Panc1 (cell line): ENCODE measurements at regions of chr18 and their contacts with region 1.

Region 1: DNA sequence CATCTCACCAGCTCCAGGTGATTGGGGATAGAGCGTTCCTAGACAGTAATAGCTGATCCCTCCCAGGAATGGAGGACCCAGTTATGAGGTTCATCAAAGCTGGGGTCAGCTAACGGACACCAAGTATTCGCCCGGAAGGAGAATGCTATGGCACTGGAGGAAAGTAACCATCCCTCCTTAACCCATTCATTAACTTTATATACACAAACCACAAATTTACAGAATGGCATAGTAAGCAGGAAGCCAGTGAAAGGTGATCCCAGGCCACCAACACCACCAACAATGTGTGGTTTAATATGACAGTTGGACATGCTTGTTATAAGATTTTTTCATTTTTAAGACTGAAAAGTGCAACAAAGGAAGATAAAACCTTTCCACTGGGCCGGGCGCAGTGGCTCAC is 55.3 kb upstream of the CHMP1B start:
- DNase-seq: no peak
- ATAC-seq: no peak
- H3K4me3 ChIP-seq: no peak overlapping the region
- H3K27ac ChIP-seq: no peak overlapping the region
- H3K4me1 ChIP-seq: no peaks in the 10 kb centered on the region
- H3K27me3 ChIP-seq: no peaks in the 10 kb centered on the region
- CTCF ChIP-seq: no peak

Region 2: GRCh38 chr18:11577271-11578112 is 218.4 kb before region 1 on chr18:
- CTCF ChIA-PET with region 1: no interaction called
- POLR2A ChIA-PET with region 1: no interaction called
- in situ Hi-C with region 1: no loop called
- intact Hi-C with region 1: no loop called
- DNase-seq: no peak
- ATAC-seq: no peak
- H3K4me3 ChIP-seq: no peak overlapping the region
- H3K27ac ChIP-seq: no peak overlapping the region
- H3K4me1 ChIP-seq: no peaks in the 10 kb centered on the region
- H3K27me3 ChIP-seq: peaks cover 11% of the 10 kb centered on the region
- CTCF ChIP-seq: no peak

Region 3: DNA sequence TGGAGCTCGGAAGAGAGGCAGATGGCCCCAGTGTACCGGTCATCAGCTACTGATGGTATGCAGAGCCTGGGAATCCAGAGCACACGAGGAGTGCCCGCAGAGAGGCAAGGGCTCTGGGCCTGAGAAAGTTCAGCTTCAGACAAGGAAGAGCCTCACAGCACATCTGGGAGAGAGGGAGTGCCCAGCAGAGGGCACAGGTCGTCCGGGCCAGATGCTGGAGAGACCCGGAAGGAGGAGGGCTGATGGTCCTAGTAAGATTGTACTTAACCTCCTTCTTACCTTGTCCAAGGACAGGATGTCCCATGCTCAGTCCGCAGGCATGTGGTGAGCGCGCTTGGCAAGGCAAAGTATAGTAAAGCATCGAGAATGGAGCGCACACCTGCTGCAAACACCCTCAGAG is 30.9 kb after region 1 on chr18:
- CTCF ChIA-PET with region 1: interaction called, 10 read pairs
- POLR2A ChIA-PET with region 1: no interaction called
- in situ Hi-C with region 1: no loop called
- intact Hi-C with region 1: no loop called
- DNase-seq: no peak
- ATAC-seq: no peak
- H3K4me3 ChIP-seq: no peak overlapping the region
- H3K27ac ChIP-seq: no peak overlapping the region
- H3K4me1 ChIP-seq: no peaks in the 10 kb centered on the region
- H3K27me3 ChIP-seq: no peaks in the 10 kb centered on the region
- CTCF ChIP-seq: no peak

Region 4: DNA sequence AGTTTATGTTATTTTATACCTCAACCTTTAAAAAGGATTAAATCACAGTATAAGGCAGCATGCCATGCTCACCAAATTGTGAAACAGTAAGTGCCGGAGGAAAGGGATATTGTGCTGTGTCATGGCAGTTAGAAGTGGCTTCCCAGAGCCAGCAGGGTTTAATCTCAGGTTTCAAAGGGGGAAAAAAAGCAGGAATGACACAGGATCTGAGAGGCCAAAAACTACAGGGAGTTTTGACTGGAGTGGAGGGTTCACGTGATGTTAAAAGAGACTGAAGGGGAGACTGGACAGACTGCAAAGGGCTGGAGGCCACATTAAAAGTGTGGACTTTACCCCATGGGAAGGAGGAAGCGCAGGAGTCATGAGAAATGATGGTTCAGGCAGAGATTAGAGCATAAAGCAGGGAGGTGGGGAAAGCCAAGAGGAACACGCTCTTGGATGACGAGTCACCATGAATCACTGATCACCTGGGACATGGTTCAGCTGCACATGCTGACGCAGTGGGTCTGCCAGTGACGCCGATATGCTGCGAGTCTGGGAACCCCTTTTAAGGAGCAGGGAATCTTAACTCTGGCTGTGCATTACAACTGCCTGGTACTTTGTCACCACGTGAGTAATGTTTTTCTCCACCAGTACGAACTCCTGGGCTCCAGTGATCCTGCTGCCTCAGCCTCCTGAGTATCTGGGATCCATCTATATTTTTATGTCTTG is 61.4 kb after region 1 on chr18:
- CTCF ChIA-PET with region 1: no interaction called
- POLR2A ChIA-PET with region 1: no interaction called
- in situ Hi-C with region 1: no loop called
- intact Hi-C with region 1: no loop called
- DNase-seq: peak; percentile 98
- ATAC-seq: peak; percentile 92
- H3K4me3 ChIP-seq: peak overlapping the region in 1 of 2 experiments; percentile 50; a peak in 3 of 4 replicates
- H3K27ac ChIP-seq: peak overlapping the region; percentile 91
- H3K4me1 ChIP-seq: peaks cover 20% of the 10 kb centered on the region
- H3K27me3 ChIP-seq: no peaks in the 10 kb centered on the region
- CTCF ChIP-seq: no peak

Region 5: DNA sequence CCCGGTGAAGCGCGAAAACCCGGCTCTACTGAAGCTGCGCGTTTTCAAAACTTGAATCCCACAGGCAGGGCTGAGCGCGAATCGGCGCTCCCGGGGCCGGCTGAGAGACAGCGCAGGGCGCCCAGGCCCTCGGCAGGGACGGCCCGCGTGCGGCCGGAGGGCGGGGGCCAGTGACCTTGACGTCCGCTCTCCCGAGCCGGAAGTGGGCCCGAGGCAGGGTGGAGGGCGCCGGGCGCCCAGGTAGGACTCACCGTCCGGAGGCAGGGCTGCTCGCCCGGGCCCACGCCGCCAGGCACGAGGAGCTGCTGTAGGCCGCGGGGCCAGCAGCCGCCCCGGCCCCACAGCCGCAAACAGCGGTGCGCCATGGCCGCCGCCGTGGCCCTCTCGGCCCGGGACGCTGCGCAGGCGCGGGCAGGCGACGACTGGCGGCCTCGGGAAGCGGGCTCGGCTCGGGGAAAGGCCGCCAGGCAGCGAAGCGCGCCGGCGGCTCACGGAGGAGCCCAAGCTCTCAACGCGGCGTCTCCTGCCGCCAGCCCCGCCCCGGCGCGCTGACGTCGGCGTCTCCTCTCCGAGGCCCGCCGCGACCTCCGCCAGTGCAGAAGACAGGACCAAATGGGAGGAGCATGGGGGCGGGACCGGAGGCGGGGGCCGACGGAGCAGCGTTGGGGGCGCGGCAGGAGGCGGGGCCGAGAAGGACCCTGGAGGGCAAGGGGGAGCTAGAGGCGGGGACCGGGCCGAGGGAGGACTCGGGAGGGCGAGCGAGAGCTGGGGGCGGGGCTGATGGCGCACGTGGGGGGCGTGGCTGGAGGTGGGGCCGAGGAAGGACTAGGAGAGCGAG is 581.0 kb after region 1 on chr18 and contains the start of gene AFG3L2:
- CTCF ChIA-PET with region 1: no interaction called
- POLR2A ChIA-PET with region 1: no interaction called
- in situ Hi-C with region 1: no loop called
- intact Hi-C with region 1: no loop called
- DNase-seq: peak; percentile 79
- ATAC-seq: peak; percentile 94
- H3K4me3 ChIP-seq: peak within 1 kb of the TSS; percentile 82 to 93
- H3K27ac ChIP-seq: peak within 1 kb of the TSS; percentile 90
- H3K4me1 ChIP-seq: peaks cover 18% of the 10 kb centered on the region; the same call in 1 of the 2 replicates
- H3K27me3 ChIP-seq: no peaks in the 10 kb centered on the region
- CTCF ChIP-seq: no peak
- total RNA-seq, gene AFG3L2: 58.0 TPM

Region 6: GRCh38 chr18:12754511-12754910 is 958.6 kb after region 1 on chr18:
- CTCF ChIA-PET with region 1: no interaction called
- POLR2A ChIA-PET with region 1: no interaction called
- in situ Hi-C with region 1: no loop called
- intact Hi-C with region 1: no loop called
- DNase-seq: no peak
- ATAC-seq: no peak
- H3K4me3 ChIP-seq: no peak overlapping the region
- H3K27ac ChIP-seq: no peak overlapping the region
- H3K4me1 ChIP-seq: peaks cover 4% of the 10 kb centered on the region; the same call in 1 of the 2 replicates
- H3K27me3 ChIP-seq: no peaks in the 10 kb centered on the region
- CTCF ChIP-seq: no peak